Common myeloid progenitor, CD34-positive (primary cell): ENCODE measurements at regions of chr4 and their contacts with region 1.

Region 1: DNA sequence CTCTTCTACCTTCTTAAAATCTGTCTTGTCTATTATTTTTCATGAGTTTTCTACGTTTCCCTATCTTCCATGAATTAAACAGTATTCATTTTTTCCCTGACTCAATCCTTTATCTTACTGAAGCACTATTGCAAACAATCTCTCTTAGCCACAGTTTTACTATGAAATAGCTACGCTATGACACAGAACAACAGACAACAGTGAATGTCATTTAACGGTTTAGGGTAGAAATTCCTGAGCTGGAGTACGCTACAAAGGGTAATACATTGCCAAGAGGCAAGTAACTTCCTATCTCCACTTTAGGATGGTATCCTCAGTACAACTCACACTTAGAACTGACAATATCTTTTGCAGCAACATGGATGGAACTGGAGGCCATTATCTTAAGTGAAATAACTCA is 552.6 kb downstream of the INPP4B start:
- DNase-seq: no peak
- H3K4me3 ChIP-seq: no peak overlapping the region
- H3K27ac ChIP-seq: no peak overlapping the region
- H3K4me1 ChIP-seq: peaks cover 0 to 10% (median 3%) of the 10 kb centered on the region in 4 experiments
- H3K27me3 ChIP-seq: no peaks in the 10 kb centered on the region

Region 2: GRCh38 chr4:142282870-142283431 is 10.6 kb before region 1 on chr4:
- CTCF ChIA-PET with region 1: interaction called, 19 read pairs
- POLR2A ChIA-PET with region 1: no interaction called
- DNase-seq: peak; percentile 40 to 62 (median 59)
- H3K4me3 ChIP-seq: peak overlapping the region in 1 of 7 experiments; percentile 61
- H3K27ac ChIP-seq: no peak overlapping the region
- H3K4me1 ChIP-seq: peaks cover 5 to 40% (median 6%) of the 10 kb centered on the region in 4 experiments
- H3K27me3 ChIP-seq: no peaks in the 10 kb centered on the region